ENCODE measurements at regions of chr1 and their contacts with region 1.

Region 1: GRCh38 chr1:209860293-209860881 is 32.6 kb downstream of the UTP25 start:
- DNase-seq: peak; percentile 94
- H3K4me3 ChIP-seq: no peak overlapping the region
- H3K27ac ChIP-seq: no peak overlapping the region
- H3K4me1 ChIP-seq: peaks cover 24% of the 10 kb centered on the region
- H3K27me3 ChIP-seq: no peaks in the 10 kb centered on the region
- CTCF ChIP-seq: peak; percentile 96

Region 2: DNA sequence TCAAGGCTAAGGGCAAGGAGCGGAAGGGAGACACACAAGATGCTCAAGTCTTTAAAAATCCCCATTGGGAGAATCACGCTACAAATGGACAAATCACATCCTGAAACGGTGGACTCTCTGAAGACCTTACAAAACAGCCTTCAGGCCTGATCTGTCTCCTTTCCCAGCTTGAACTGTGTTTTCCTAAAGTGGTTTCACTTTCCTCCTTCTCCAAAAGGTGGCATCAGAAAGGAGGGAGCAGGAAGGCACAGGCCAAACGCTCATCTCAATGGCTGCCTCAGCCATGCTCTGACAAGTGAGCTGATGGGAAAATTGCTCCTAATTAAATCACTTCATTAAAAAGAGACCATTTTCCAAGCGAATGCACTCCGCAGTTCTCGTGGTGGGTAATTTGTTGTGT is 15.1 kb after region 1 on chr1:
- CTCF ChIA-PET with region 1: interaction called, 4 read pairs
- POLR2A ChIA-PET with region 1: interaction called, 17 read pairs
- intact Hi-C with region 1: no loop called
- DNase-seq: peak; percentile 82
- H3K4me3 ChIP-seq: no peak overlapping the region
- H3K27ac ChIP-seq: peak overlapping the region; percentile 46
- H3K4me1 ChIP-seq: peaks cover 38% of the 10 kb centered on the region
- H3K27me3 ChIP-seq: no peaks in the 10 kb centered on the region
- CTCF ChIP-seq: peak; percentile 62

Region 3: GRCh38 chr1:209937996-209938959 is 77.9 kb after region 1 on chr1 and contains the start of gene SYT14:
- CTCF ChIA-PET with region 1: no interaction called
- POLR2A ChIA-PET with region 1: no interaction called
- intact Hi-C with region 1: loop called (anchors 5 kb)
- DNase-seq: peak; percentile 91
- H3K4me3 ChIP-seq: peak within 1 kb of the TSS; percentile 67
- H3K27ac ChIP-seq: peak within 1 kb of the TSS; percentile 64
- H3K4me1 ChIP-seq: peaks cover 38% of the 10 kb centered on the region
- H3K27me3 ChIP-seq: no peaks in the 10 kb centered on the region
- CTCF ChIP-seq: no peak
- total RNA-seq, gene SYT14: 18.2 and 22.4 TPM in 2 replicates

Region 4: DNA sequence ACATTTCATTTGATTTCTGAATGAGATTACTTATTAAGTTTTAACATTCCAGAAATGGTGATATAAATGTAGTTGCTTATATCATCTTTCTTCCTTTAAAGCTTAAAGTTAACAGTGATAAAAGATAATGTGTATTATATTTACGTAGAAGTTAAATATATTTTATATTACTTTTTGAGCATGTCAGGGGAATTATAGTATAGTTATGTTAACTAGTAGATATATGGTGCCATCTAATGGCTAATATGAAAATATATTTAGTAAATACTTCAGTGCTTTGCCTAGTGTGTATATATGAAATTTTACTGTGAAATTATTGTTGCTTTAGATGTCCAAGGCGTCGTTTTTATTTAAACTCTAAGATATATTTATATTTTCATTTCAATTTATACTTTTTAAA is 129.1 kb after region 1 on chr1:
- CTCF ChIA-PET with region 1: interaction called, 9 read pairs
- POLR2A ChIA-PET with region 1: no interaction called
- intact Hi-C with region 1: loop called (anchors 1 kb)
- DNase-seq: peak; percentile 58
- H3K4me3 ChIP-seq: no peak overlapping the region
- H3K27ac ChIP-seq: peak overlapping the region; percentile 14
- H3K4me1 ChIP-seq: peaks cover 23% of the 10 kb centered on the region
- H3K27me3 ChIP-seq: no peaks in the 10 kb centered on the region
- CTCF ChIP-seq: peak; percentile 64

Region 5: DNA sequence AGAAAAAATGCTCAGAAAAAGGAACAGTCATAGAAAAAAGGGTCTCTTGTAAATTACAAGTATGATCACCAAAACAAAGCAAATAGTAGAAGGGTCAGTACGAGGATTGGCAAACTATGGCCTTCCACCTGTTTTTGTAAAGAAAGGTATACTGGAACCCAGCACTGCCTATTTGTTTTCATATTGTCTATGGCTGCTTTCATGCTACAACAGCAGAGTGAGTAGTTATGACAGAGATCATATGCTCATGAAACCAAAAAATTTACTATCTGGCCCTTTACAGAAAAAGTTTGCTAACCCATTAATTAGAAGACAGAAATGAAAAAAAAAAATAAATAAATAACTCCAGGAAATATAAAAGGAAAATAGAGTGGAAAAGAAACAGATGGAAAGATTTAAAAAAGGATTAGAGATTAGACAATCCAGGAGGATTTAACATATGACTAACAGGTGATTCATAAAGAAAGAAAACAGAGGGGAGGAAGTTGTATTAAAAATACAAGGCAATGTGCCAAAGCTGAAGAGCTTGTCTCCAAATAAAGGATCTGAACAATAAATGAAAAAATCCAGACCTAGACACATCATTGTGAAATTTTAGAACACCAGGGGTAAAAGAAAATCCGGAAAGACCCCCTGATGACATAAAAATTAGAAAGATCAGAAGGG is 263.7 kb after region 1 on chr1:
- CTCF ChIA-PET with region 1: no interaction called
- POLR2A ChIA-PET with region 1: no interaction called
- intact Hi-C with region 1: loop called (anchors 10 kb)
- DNase-seq: peak; percentile 98
- H3K4me3 ChIP-seq: no peak overlapping the region
- H3K27ac ChIP-seq: peak overlapping the region; percentile 79
- H3K4me1 ChIP-seq: peaks cover 38% of the 10 kb centered on the region
- H3K27me3 ChIP-seq: no peaks in the 10 kb centered on the region
- CTCF ChIP-seq: no peak

Region 6: DNA sequence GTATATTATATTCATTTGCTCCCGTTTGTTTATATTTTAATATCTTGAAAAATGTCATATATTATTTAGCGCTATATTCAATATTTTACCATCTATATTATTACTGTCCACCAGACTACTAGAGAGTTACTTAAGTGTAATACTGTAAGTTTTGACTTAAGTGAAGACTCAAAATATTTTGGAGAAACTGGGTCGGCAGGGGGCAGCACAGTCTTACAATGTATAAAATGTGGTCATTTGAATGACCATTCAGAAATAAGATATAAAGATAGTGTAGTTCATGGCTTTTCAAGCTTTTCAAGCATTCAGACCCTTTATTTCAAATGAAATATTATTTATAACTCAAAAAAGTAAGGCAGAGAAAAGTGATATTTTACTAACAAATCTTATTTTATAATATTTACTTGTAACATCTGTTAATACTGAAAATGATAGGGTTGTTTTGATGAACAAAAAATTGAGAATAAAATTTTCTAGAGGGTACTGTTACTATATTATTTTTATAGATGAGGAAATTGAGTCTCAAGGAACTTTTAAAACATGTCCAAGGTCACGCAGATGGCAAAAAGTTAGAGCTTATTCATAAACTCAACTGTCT is 283.2 kb after region 1 on chr1:
- CTCF ChIA-PET with region 1: no interaction called
- POLR2A ChIA-PET with region 1: no interaction called
- intact Hi-C with region 1: no loop called
- DNase-seq: peak; percentile 85
- H3K4me3 ChIP-seq: no peak overlapping the region
- H3K27ac ChIP-seq: no peak overlapping the region
- H3K4me1 ChIP-seq: no peaks in the 10 kb centered on the region
- H3K27me3 ChIP-seq: no peaks in the 10 kb centered on the region
- CTCF ChIP-seq: peak; percentile 83